ENCODE measurements at regions of chr13 and their contacts with region 1.

Region 1: DNA sequence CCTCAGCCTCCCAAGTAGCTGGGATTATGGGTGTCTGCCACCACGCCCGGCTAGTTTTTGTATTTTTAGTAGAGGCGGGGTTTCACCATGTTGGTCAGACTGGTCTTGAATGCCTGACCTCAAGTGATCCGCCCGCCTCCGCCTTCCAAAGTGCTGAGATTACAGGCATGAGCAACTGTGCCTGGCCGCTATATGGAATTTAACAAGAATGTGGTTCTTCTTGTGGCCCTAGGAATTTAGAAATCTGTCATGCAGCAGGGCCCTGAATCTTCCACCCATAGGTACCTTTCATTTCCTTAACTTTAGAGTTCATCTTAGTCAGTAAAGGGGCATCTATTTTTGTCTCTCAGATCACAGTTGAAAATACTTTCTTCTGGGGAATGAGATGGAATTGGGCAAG is 25.6 kb upstream of the NDFIP2 start:
- DNase-seq: peak; percentile 70 to 88
- H3K4me3 ChIP-seq: no peak overlapping the region
- H3K27ac ChIP-seq: peak overlapping the region; percentile 50
- H3K4me1 ChIP-seq: peaks cover 40% of the 10 kb centered on the region
- H3K27me3 ChIP-seq: no peaks in the 10 kb centered on the region
- CTCF ChIP-seq: no peak

Region 2: GRCh38 chr13:79491715-79492114 is 36.4 kb after region 1 on chr13:
- CTCF ChIA-PET with region 1: no interaction called
- POLR2A ChIA-PET with region 1: no interaction called
- intact Hi-C with region 1: loop called (anchors 1 kb)
- DNase-seq: peak in 1 of 2 experiments; percentile 65
- H3K4me3 ChIP-seq: no peak overlapping the region
- H3K27ac ChIP-seq: peak overlapping the region; percentile 3; the same call in 1 of the 2 replicates
- H3K4me1 ChIP-seq: peaks cover 15% of the 10 kb centered on the region; the same call in 1 of the 2 replicates
- H3K27me3 ChIP-seq: no peaks in the 10 kb centered on the region
- CTCF ChIP-seq: no peak

Region 3: GRCh38 chr13:79533781-79534400 is 78.6 kb after region 1 on chr13:
- CTCF ChIA-PET with region 1: no interaction called
- POLR2A ChIA-PET with region 1: interaction called, 13 read pairs
- intact Hi-C with region 1: no loop called
- DNase-seq: no peak
- H3K4me3 ChIP-seq: no peak overlapping the region
- H3K27ac ChIP-seq: no peak overlapping the region
- H3K4me1 ChIP-seq: no peaks in the 10 kb centered on the region
- H3K27me3 ChIP-seq: no peaks in the 10 kb centered on the region
- CTCF ChIP-seq: no peak

Region 4: DNA sequence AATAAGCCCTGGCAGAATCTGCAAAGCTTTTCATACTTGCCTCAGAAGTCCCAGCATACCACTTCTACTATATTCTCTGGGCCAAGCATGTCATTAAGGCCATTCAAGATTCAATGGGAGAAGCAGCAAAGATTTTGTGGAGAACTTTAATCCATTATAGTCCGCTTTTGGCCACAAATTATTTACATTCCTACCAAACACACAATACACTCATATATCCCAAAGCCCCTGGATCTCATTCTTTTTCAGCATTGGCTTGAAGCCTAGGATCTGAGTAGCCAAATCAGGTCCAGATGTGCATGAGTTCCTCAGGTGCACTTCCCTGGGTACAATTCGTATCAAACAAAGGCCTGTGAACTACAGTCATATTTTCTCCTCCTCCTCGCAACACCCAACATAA is 229.0 kb after region 1 on chr13:
- CTCF ChIA-PET with region 1: no interaction called
- POLR2A ChIA-PET with region 1: interaction called, 31 read pairs
- intact Hi-C with region 1: no loop called
- DNase-seq: no peak
- H3K4me3 ChIP-seq: no peak overlapping the region
- H3K27ac ChIP-seq: no peak overlapping the region
- H3K4me1 ChIP-seq: peaks cover 16% of the 10 kb centered on the region
- H3K27me3 ChIP-seq: no peaks in the 10 kb centered on the region
- CTCF ChIP-seq: no peak

Measured in PC-9 (cell line).